Left ventricle myocardium inferior (tissue), 1 donor: ENCODE measurements at regions of chr1 and their contacts with region 1.

Region 1: DNA sequence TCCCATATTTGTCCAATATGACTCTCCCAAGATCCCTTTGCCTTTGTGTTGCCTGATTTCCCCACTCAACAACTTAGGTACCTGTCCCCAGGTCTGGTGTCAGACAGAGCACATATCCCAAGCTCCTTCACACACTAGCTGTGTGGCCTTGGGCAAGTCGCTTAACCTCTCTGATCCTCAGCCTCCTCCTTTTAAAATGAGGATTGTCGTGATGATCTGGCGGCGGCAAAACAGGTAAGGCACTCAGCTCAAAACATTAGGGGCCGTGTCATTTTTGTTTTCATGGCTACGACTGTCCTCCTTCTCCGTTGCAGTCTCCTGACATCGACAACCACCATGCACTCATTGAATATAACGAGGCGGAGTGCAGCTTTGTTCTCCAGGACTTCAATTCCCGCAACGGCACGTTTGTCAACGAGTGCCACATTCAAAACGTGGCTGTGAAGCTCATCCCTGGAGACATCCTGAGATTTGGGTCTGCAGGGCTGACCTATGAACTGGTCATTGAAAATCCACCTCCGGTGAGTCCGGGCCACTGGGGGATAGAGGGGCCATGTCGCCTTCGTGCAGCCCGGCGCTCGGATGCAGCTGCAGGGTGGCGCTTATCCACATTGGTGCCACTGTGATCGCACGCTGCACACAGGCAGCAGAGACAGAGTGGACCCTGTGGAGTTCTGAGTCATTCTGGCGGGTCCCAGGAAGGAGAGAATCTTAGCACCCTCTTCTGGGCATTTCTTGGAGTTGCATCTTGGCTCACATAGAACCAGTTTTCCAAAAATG is 25.2 kb downstream of the FHAD1 start:
- DNase-seq: peak; percentile 31
- H3K4me3 ChIP-seq: no peak overlapping the region
- H3K27ac ChIP-seq: no peak overlapping the region
- H3K4me1 ChIP-seq: peaks cover 4% of the 10 kb centered on the region
- H3K27me3 ChIP-seq: peaks cover 11% of the 10 kb centered on the region
- CTCF ChIP-seq: peak; percentile 87

Region 2: GRCh38 chr1:15128520-15129313 is 143.5 kb before region 1 on chr1:
- intact Hi-C with region 1: loop called (anchors 5 kb)
- DNase-seq: peak; percentile 68
- H3K4me3 ChIP-seq: no peak overlapping the region
- H3K27ac ChIP-seq: no peak overlapping the region
- H3K4me1 ChIP-seq: no peaks in the 10 kb centered on the region
- H3K27me3 ChIP-seq: peaks cover under 1% of the 10 kb centered on the region
- CTCF ChIP-seq: peak; percentile 92

Region 3: DNA sequence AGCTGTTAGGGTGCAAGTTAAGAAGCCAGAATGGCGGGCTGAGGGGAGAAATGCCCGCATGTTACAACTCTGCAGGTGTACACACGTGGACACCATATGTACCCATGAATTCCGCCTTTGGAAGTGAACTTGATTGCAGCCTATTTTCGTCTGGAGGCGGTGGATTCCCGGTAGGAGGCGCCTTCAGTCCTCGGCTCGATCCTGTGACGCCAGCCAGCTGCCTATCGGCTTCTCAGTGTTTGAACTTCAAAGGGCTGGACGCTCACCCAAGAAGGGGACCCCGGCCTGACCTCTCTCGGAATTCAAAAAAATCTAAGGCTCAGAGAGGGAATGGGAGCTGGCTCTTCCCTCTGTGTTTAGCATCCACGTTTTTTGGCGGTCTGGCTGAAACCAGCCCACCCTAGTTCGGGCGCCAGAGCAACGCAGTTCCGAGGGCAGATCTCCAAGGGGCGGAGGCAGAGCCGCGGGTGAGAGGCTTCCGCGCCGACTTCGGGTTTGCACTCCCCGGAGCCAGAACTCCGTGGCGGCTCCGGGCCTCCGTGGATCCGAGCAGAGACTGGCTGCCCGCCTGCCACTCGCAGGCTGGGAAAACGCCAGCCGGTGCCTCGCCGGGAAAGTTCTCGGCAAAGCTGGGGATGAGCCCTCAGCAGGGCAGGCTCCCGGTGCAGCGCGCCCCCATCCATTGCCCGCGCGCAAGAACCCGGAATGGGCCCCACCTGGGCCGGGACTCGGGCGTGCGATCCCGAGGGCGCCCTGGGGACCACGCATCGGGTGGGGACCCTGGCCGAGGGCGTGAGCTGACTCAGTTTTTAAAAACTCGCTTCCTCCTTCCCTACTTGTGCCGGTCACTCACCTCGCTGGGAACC is 119.6 kb before region 1 on chr1:
- intact Hi-C with region 1: loop called (anchors 10 kb)
- DNase-seq: peak; percentile 82
- H3K4me3 ChIP-seq: peak overlapping the region; percentile 87
- H3K27ac ChIP-seq: peak overlapping the region; percentile 86
- H3K4me1 ChIP-seq: peaks cover 64% of the 10 kb centered on the region
- H3K27me3 ChIP-seq: no peaks in the 10 kb centered on the region
- CTCF ChIP-seq: peak; percentile 76